Mammary epithelial cell (primary cell): ENCODE measurements at regions of chr11 and their contacts with region 1.

Region 1: DNA sequence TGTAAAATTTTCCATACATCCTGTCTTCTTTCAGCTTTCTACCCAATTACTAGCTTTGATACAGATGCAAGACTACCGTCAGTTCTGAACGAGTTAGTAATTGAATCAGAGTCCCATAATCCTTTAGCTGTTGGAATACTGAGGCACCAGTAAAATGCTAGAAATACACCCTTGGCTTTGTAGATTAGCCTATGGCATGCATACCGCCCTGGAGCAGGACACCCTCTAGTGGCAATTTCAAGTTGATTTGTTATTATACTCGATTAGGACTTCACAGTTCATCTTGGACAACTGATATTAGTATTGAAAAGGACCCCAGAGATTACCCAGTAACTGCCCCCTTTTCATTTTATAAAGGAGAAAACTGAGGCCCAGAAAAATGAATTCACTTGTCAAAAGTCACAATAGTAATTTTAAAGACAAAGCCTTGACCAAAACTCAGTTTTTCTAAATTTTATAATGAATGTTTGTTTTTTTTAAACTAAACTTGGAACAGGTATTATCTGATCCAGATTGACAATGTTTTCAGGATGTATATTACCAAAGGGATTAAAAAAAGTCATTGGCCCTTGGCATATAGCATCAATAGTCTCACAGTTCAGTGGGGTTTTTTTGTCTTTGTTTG is 72.6 kb downstream of the HIPK3 start:
- DNase-seq: peak; percentile 55
- H3K4me3 ChIP-seq: no peak overlapping the region
- H3K27ac ChIP-seq: no peak overlapping the region
- H3K4me1 ChIP-seq: no peaks in the 10 kb centered on the region
- H3K27me3 ChIP-seq: no peaks in the 10 kb centered on the region
- CTCF ChIP-seq: peak; percentile 62 to 75

Region 2: DNA sequence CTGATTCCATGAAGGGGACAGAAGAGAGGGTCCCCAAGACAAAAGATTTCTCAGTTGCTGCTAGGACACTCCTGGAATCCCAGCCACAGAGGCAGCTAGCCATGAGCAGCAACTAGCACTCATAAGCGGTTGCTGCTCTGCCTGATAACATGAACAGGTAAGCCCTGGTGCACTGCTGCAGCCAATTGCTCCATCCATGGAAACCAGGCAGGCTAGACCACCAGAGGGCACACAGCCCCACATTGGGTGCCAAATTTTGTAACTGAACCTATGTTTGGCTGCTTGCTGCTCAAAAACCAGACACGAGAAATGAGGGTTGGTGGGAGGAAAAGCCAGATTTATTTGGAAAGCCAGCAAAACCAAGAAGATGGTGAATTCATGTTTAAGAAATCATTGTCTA is 459.1 kb before region 1 on chr11:
- CTCF ChIA-PET with region 1: no interaction called
- dilution Hi-C with region 1: no loop called
- in situ Hi-C with region 1: no loop called
- intact Hi-C with region 1: no loop called
- DNase-seq: no peak
- H3K4me3 ChIP-seq: no peak overlapping the region
- H3K27ac ChIP-seq: no peak overlapping the region
- H3K4me1 ChIP-seq: no peaks in the 10 kb centered on the region
- H3K27me3 ChIP-seq: no peaks in the 10 kb centered on the region
- CTCF ChIP-seq: peak in 1 of 2 donors; percentile 12

Region 3: GRCh38 chr11:32960553-32961164 is 369.2 kb before region 1 on chr11:
- CTCF ChIA-PET with region 1: no interaction called
- dilution Hi-C with region 1: no loop called
- in situ Hi-C with region 1: loop called in 1 of 2 experiments (anchors 25 kb)
- intact Hi-C with region 1: loop called (anchors 5 kb)
- DNase-seq: peak; percentile 40
- H3K4me3 ChIP-seq: no peak overlapping the region
- H3K27ac ChIP-seq: no peak overlapping the region
- H3K4me1 ChIP-seq: no peaks in the 10 kb centered on the region
- H3K27me3 ChIP-seq: no peaks in the 10 kb centered on the region
- CTCF ChIP-seq: peak; percentile 50 to 63

Region 4: GRCh38 chr11:33161120-33162005 is 168.5 kb before region 1 on chr11 and contains the start of gene CSTF3:
- CTCF ChIA-PET with region 1: no interaction called
- dilution Hi-C with region 1: no loop called
- in situ Hi-C with region 1: loop called (anchors 5 kb)
- intact Hi-C with region 1: loop called (anchors 1 kb)
- DNase-seq: peak; percentile 97
- H3K4me3 ChIP-seq: peak within 1 kb of the TSS; percentile 87 to 100 (median 99)
- H3K27ac ChIP-seq: peak within 1 kb of the TSS; percentile 97
- H3K4me1 ChIP-seq: peaks cover 24% of the 10 kb centered on the region
- H3K27me3 ChIP-seq: no peaks in the 10 kb centered on the region
- CTCF ChIP-seq: peak; percentile 2 to 38
- total RNA-seq, gene CSTF3: 21.3 to 32.9 TPM

Region 5: GRCh38 chr11:33168709-33169200 is 161.1 kb before region 1 on chr11:
- CTCF ChIA-PET with region 1: no interaction called
- dilution Hi-C with region 1: no loop called
- in situ Hi-C with region 1: loop called (anchors 5 kb)
- intact Hi-C with region 1: loop called (anchors 1 kb)
- DNase-seq: no peak
- H3K4me3 ChIP-seq: no peak overlapping the region
- H3K27ac ChIP-seq: no peak overlapping the region
- H3K4me1 ChIP-seq: no peaks in the 10 kb centered on the region
- H3K27me3 ChIP-seq: no peaks in the 10 kb centered on the region
- CTCF ChIP-seq: no peak

Region 6: GRCh38 chr11:33257897-33258630 is 71.8 kb before region 1 on chr11:
- CTCF ChIA-PET with region 1: no interaction called
- dilution Hi-C with region 1: no loop called
- in situ Hi-C with region 1: no loop called
- intact Hi-C with region 1: loop called (anchors 2 kb)
- DNase-seq: peak; percentile 81
- H3K4me3 ChIP-seq: peak overlapping the region; percentile 57 to 94 (median 65)
- H3K27ac ChIP-seq: peak overlapping the region; percentile 96
- H3K4me1 ChIP-seq: peaks cover 18% of the 10 kb centered on the region
- H3K27me3 ChIP-seq: no peaks in the 10 kb centered on the region
- CTCF ChIP-seq: peak; percentile 9 to 29